Left ventricle myocardium superior (tissue), 1 donor: ENCODE measurements at regions of chr12 and their contacts with region 1.

Region 1: GRCh38 chr12:122860346-122861090 is 25.3 kb downstream of the HIP1R start:
- DNase-seq: peak; percentile 90
- ATAC-seq: peak; percentile 77

Region 2: DNA sequence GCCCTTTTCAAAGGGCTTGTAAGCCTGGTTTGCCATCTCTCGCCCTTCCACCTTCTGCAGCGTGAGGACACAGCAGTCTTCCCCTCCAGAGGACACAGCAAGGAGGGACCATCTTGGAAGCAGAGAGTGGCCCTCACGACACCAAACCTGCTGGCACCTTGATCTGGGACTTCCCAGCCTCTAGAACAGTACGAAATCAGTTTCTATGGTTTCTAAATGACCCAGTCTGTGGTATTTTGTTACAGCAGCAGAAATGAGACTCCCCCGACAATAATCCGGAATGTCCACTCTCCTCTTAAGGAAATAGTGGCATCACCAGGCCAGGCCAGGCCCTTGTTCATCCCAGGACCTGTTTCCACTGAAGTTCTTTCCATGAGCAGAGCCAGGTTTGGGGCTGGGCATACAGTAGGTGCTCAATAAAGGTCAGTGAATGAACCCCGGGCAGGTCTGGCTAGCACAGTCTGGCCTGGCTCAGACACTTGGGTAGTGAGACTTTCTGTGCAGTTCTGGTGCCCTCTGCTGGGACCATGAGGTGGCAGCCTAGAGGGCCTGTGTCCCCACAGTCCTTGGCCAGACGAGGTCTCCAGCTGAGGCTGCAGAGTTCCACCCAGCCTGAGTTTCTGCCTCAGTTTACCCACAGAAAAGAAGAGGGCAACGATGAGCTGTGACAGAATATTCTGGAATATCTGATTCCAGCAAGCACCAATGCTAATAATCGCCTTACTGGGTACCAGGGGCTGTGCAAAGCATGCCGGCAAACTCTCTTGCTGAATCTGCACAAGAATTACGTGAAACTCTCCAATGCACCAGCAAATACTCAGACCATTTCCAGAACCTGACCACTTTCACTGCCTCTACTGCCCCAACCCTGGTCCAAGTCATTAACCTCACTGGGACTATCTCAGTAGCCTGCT is 91.7 kb after region 1 on chr12:
- intact Hi-C with region 1: loop called (anchors 5 kb)
- DNase-seq: peak; percentile 82
- ATAC-seq: peak; percentile 95